Esophagus muscularis mucosa (tissue), 4 donors: ENCODE measurements at regions of chr3 and their contacts with region 1.

Region 1: DNA sequence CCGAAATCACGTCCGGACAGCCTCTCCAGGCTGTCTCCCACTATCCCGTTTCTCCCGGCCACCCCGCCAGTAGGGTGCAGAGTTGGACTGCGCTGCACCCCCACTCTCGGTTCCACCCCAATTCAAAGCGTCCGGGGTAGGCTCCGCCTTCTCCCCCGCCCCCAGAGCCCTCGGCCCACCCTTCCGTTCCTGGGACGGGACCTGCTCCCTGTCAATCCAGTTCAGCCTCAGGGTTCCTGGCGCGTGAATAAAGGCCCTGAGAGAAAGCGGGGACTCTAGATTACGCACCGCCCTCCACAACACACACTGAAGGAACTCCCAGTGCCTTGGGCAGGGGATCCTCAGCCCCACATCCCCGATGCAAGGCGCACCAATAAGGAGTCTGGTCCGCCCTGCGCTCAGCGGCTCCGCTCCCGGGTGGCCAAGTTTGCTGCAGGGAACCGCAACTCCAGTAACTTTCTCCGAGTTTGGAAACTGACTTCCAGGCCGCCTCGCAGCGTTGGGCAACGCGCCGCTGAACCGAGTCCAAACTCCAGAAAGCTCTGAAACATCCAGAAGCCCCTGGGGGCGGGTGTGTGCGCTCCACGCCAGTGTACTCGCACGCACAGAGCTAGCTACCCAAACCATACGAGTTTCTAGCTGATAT is 1.9 kb downstream of the ADAMTS9 start:
- DNase-seq: peak; percentile 96
- H3K4me3 ChIP-seq: peak overlapping the region; percentile 74 to 84 (median 76)
- H3K27ac ChIP-seq: peak overlapping the region; percentile 97 to 98 (median 97)
- H3K4me1 ChIP-seq: peaks cover 8 to 48% (median 42%) of the 10 kb centered on the region in 4 donors
- H3K27me3 ChIP-seq: peaks cover 0 to 3% (median 0%) of the 10 kb centered on the region in 4 donors
- CTCF ChIP-seq: peak; percentile 50 to 64 (median 62)
- EP300 ChIP-seq: no peak
- POLR2A ChIP-seq: peak; percentile 57

Region 2: DNA sequence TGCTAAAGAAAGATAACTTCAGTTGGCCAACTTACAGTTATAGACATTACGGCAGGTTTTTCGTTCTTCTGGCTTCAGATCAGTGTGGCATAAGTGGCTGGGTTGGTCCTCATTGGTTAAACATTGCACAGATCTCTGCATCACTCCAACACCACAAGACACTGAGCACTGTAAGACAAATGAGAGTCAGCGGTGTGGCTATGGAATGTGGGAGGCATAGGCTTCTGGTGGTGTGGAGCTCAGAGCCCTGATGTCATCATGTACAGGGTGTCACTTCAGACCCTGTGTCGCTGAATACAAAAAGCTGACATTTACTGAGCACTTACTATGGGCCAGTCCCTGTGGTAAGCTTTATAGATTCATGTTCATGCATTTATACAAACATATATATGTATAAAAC is 144.1 kb before region 1 on chr3:
- intact Hi-C with region 1: no loop called
- DNase-seq: no peak
- H3K4me3 ChIP-seq: no peak overlapping the region
- H3K27ac ChIP-seq: no peak overlapping the region
- H3K4me1 ChIP-seq: peaks cover 7 to 45% (median 36%) of the 10 kb centered on the region in 4 donors
- H3K27me3 ChIP-seq: no peaks in the 10 kb centered on the region
- CTCF ChIP-seq: no peak
- EP300 ChIP-seq: no peak
- POLR2A ChIP-seq: no peak

Region 3: GRCh38 chr3:64606191-64606590 is 79.7 kb before region 1 on chr3:
- intact Hi-C with region 1: loop called (anchors 5 kb)
- DNase-seq: no peak
- H3K4me3 ChIP-seq: no peak overlapping the region
- H3K27ac ChIP-seq: no peak overlapping the region
- H3K4me1 ChIP-seq: peaks cover 0 to 7% (median under 1%) of the 10 kb centered on the region in 4 donors
- H3K27me3 ChIP-seq: no peaks in the 10 kb centered on the region
- CTCF ChIP-seq: no peak
- EP300 ChIP-seq: no peak
- POLR2A ChIP-seq: no peak

Region 4: DNA sequence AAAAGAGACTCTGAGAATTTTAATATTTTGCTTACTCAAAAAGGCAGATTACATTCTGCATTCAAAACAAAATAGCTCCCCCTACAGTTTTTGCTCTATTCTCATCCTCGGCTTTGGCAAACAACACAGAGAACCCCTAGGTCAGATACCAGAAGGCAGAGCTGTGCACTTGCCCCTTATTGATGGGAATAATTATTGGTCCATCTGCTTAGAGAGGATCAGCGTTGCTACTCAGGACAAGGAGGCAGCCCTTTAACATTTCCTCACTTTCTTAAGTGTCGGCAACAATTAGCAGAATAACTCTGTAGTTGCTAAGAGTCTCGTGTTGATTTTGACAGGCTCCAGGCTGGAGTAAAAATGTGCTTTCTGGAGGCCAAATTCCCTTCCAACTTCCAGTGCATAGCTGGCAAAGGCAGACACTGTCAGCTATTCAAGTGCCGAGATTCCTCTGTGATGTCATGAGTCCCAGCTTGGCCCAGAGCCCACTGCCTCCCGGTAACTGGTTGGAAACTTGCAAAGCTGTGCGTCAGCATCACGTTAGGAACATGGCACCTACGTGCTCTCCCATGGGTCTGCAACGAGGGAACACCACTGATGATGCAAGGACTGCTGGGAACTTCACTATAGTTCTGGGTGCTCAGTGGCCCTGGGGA is 484.6 kb after region 1 on chr3:
- intact Hi-C with region 1: loop called (anchors 2 kb)
- DNase-seq: peak; percentile 95
- H3K4me3 ChIP-seq: peak overlapping the region in 2 of 4 donors; percentile 11 to 21
- H3K27ac ChIP-seq: peak overlapping the region; percentile 72 to 82 (median 74)
- H3K4me1 ChIP-seq: peaks cover 22 to 31% (median 25%) of the 10 kb centered on the region in 4 donors
- H3K27me3 ChIP-seq: no peaks in the 10 kb centered on the region
- CTCF ChIP-seq: peak; percentile 46 to 53 (median 47)
- EP300 ChIP-seq: peak; percentile 100
- POLR2A ChIP-seq: no peak

Region 5: DNA sequence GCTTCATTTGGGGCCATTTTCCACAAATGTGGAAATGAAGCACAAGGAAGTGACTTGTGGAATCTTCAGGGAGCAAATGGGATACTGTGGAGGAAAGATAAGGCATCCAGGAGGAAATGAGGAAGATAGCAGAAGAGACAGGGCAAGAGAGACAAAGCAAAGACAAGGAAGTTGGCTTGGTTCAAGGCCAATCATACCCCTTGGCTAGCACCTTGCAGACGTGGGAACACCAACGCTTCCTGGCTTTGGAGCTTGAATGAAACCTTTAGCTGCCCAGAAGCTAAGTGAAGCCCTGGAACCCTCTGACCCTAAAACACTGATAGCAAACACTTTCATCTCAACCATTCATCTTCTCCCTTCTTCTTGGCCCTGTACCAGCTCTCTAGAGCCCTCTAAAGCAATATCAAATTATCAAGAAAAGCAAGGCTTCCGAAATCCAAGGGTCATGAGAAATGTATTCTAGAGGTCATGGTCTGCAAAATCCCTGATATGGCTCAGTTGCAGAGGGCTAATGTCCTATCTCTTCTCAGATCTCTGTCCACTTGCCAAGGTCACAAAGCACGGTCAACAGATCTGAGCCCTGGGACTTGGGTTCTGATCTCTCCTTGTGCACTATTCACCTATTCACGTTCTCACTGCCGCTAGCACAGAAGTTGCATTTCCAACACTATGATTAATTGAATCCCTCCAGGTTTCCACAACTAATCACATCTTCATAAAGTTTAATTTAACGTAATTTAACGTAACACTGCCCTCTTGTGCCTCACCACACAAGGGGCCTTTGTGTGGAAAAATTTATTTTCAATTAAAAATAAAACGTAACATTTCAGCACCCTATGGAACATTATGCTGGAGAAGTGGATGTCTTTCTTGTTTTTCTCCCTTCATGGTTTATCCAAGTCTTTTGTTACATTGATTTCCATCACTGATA is 559.5 kb after region 1 on chr3:
- intact Hi-C with region 1: loop called (anchors 10 kb)
- DNase-seq: no peak
- H3K4me3 ChIP-seq: no peak overlapping the region
- H3K27ac ChIP-seq: no peak overlapping the region
- H3K4me1 ChIP-seq: peaks cover 0 to 9% (median 3%) of the 10 kb centered on the region in 4 donors
- H3K27me3 ChIP-seq: no peaks in the 10 kb centered on the region
- CTCF ChIP-seq: peak; percentile 57 to 66 (median 60)
- EP300 ChIP-seq: no peak
- POLR2A ChIP-seq: no peak